GM12878 (cell line): ENCODE measurements at regions of chr1 and their contacts with region 1.

Region 1: DNA sequence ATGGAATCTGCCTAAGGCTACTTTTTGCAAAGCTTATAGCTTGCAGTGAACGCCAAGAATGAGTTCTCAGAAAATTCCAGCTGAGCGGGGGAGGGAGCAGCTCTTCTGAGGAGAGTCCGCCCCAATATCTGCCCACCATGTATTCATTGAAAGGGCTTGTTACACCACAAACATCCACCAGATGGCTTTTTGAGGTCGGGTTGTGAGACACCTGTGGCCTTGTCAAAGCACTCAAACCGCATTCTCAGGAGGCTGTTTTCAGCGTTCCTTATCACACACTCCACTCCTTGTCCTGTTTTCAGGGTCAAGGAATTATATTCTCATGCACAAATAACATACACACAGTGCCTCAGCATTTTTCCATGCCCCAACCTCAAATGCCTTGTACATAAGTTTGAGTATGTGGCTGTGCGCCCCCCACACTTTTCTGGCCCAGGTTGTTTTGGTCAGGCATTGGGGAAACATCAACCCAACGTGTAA is 3.9 kb upstream of the C4BPB start:
- DNase-seq: no peak
- ATAC-seq: peak; percentile 96
- H3K4me3 ChIP-seq: no peak overlapping the region
- H3K27ac ChIP-seq: no peak overlapping the region
- H3K4me1 ChIP-seq: peaks cover 4% of the 10 kb centered on the region; the same call in 1 of the 2 replicates
- H3K27me3 ChIP-seq: no peaks in the 10 kb centered on the region
- CTCF ChIP-seq: peak; percentile 63 to 68 (median 66)
- EP300 ChIP-seq: no peak
- POLR2A ChIP-seq: no peak
- RAD21 ChIP-seq: peak; percentile 80

Region 2: DNA sequence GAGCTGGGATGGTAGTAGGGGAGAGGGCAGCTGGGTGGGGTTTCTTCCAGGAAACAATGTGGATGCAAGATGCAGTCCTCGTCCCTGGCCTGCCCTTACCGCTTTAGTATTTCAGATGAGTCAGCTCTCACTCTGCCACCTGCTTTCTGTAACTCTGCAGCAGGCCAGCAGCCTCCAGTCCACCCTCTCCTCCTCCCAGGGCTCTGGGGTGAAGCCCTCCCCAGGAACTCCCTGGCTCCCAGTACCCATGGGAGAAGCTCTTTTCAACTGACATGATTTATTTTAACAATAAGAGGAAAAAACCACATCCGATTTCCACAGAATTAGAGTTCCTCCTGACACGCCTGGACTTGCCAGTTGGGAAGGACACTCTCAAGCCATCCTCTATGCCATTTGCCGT is 258.3 kb before region 1 on chr1:
- CTCF ChIA-PET with region 1: no interaction called
- POLR2A ChIA-PET with region 1: no interaction called
- RAD21 ChIA-PET with region 1: no interaction called
- SMC1A ChIA-PET with region 1: no interaction called
- in situ Hi-C with region 1: no loop called
- intact Hi-C with region 1: no loop called
- DNase-seq: no peak
- ATAC-seq: no peak
- H3K4me3 ChIP-seq: no peak overlapping the region
- H3K27ac ChIP-seq: no peak overlapping the region
- H3K4me1 ChIP-seq: peaks cover 25% of the 10 kb centered on the region
- H3K27me3 ChIP-seq: no peaks in the 10 kb centered on the region
- CTCF ChIP-seq: no peak
- EP300 ChIP-seq: no peak
- POLR2A ChIP-seq: no peak
- RAD21 ChIP-seq: no peak

Region 3: GRCh38 chr1:207052911-207053769 is 31.6 kb before region 1 on chr1 and contains the start of gene PFKFB2:
- CTCF ChIA-PET with region 1: interaction called, 44 read pairs
- POLR2A ChIA-PET with region 1: no interaction called
- RAD21 ChIA-PET with region 1: interaction called, 6 read pairs
- SMC1A ChIA-PET with region 1: interaction called, 65 read pairs
- in situ Hi-C with region 1: no loop called
- intact Hi-C with region 1: no loop called
- DNase-seq: peak; percentile 66
- ATAC-seq: peak; percentile 87
- H3K4me3 ChIP-seq: peak within 1 kb of the TSS; percentile 82
- H3K27ac ChIP-seq: peak within 1 kb of the TSS; percentile 31; the same call in 1 of the 2 replicates
- H3K4me1 ChIP-seq: peaks cover 21% of the 10 kb centered on the region
- H3K27me3 ChIP-seq: no peaks in the 10 kb centered on the region
- CTCF ChIP-seq: peak in 2 of 3 experiments; percentile 18 to 31; a peak in 2 of 6 replicates
- EP300 ChIP-seq: no peak
- POLR2A ChIP-seq: peak; percentile 82
- RAD21 ChIP-seq: no peak
- polyA plus RNA-seq, gene PFKFB2: 0.40 to 0.47 TPM

Region 4: DNA sequence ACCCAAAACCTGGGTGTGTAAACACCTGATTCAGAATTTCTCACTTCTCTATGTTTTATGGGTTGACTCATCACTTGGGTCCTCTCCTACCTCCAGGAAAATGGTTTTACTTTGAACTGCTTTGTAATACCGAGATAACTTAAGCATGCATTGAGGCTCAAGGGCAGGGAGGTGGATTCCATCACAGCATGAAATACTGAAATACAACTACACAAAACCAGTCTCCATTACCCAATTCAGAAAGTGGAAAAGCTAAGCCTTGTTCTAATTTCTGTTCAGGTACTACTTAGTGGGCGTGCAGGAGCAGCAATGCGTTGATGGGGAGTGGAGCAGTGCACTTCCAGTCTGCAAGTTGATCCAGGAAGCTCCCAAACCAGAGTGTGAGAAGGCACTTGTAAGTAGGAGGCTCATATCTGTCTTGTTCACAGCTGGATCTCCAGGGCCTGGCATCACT is 13.2 kb after region 1 on chr1:
- CTCF ChIA-PET with region 1: interaction called, 13 read pairs
- POLR2A ChIA-PET with region 1: no interaction called
- RAD21 ChIA-PET with region 1: interaction called, 4 read pairs
- SMC1A ChIA-PET with region 1: interaction called, 10 read pairs
- in situ Hi-C with region 1: no loop called
- intact Hi-C with region 1: no loop called
- DNase-seq: peak; percentile 67
- ATAC-seq: peak; percentile 96
- H3K4me3 ChIP-seq: no peak overlapping the region
- H3K27ac ChIP-seq: no peak overlapping the region
- H3K4me1 ChIP-seq: peaks cover 4% of the 10 kb centered on the region
- H3K27me3 ChIP-seq: no peaks in the 10 kb centered on the region
- CTCF ChIP-seq: no peak
- EP300 ChIP-seq: peak in 1 of 2 experiments; percentile 46; a peak in 1 of 4 replicates
- POLR2A ChIP-seq: no peak
- RAD21 ChIP-seq: no peak

Region 5: DNA sequence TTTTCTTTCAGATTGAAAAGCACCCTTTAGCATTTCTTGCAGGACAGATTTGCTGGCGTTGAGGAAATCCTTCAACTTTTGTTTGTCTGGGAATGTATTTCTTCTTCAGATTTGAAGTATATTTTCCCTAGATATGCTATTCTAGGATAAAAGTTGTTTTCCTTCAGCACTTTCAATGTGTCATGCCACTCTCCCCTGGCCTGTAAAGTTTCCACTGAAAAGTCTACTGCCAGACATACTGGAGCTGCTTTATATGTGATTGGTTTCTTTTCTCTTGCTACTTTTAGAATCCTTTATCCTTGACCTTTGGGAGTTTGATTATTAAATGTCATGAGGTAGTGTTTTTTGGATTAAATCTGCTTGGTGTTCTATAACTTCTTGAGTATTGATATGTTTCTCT is 192.5 kb after region 1 on chr1:
- CTCF ChIA-PET with region 1: no interaction called
- POLR2A ChIA-PET with region 1: no interaction called
- RAD21 ChIA-PET with region 1: no interaction called
- SMC1A ChIA-PET with region 1: no interaction called
- in situ Hi-C with region 1: no loop called
- intact Hi-C with region 1: no loop called
- DNase-seq: no peak
- ATAC-seq: no peak
- H3K4me3 ChIP-seq: no peak overlapping the region
- H3K27ac ChIP-seq: no peak overlapping the region
- H3K4me1 ChIP-seq: no peaks in the 10 kb centered on the region
- H3K27me3 ChIP-seq: no peaks in the 10 kb centered on the region
- CTCF ChIP-seq: no peak
- EP300 ChIP-seq: no peak
- POLR2A ChIP-seq: no peak
- RAD21 ChIP-seq: no peak

Region 6: GRCh38 chr1:207499573-207499972 is 414.8 kb after region 1 on chr1:
- CTCF ChIA-PET with region 1: interaction called, 46 read pairs
- POLR2A ChIA-PET with region 1: no interaction called
- RAD21 ChIA-PET with region 1: interaction called, 11 read pairs
- SMC1A ChIA-PET with region 1: interaction called, 30 read pairs
- in situ Hi-C with region 1: loop called (anchors 5 kb)
- intact Hi-C with region 1: loop called (anchors 1 kb)
- DNase-seq: peak; percentile 64
- ATAC-seq: peak; percentile 81
- H3K4me3 ChIP-seq: no peak overlapping the region
- H3K27ac ChIP-seq: no peak overlapping the region
- H3K4me1 ChIP-seq: peaks cover 6% of the 10 kb centered on the region
- H3K27me3 ChIP-seq: no peaks in the 10 kb centered on the region; a peak in 1 of 4 replicates
- CTCF ChIP-seq: peak; percentile 64 to 85 (median 80)
- EP300 ChIP-seq: no peak
- POLR2A ChIP-seq: no peak
- RAD21 ChIP-seq: peak; percentile 96

Region 7: GRCh38 chr1:207519505-207520404 is 435.0 kb after region 1 on chr1:
- CTCF ChIA-PET with region 1: interaction called, 12 read pairs
- POLR2A ChIA-PET with region 1: no interaction called
- RAD21 ChIA-PET with region 1: no interaction called
- SMC1A ChIA-PET with region 1: interaction called, 4 read pairs
- in situ Hi-C with region 1: no loop called
- intact Hi-C with region 1: no loop called
- DNase-seq: no peak
- ATAC-seq: no peak
- H3K4me3 ChIP-seq: no peak overlapping the region
- H3K27ac ChIP-seq: no peak overlapping the region
- H3K4me1 ChIP-seq: no peaks in the 10 kb centered on the region
- H3K27me3 ChIP-seq: no peaks in the 10 kb centered on the region
- CTCF ChIP-seq: no peak
- EP300 ChIP-seq: no peak
- POLR2A ChIP-seq: no peak
- RAD21 ChIP-seq: no peak